ENCODE measurements at regions of chr2 and their contacts with region 1.

Region 1: DNA sequence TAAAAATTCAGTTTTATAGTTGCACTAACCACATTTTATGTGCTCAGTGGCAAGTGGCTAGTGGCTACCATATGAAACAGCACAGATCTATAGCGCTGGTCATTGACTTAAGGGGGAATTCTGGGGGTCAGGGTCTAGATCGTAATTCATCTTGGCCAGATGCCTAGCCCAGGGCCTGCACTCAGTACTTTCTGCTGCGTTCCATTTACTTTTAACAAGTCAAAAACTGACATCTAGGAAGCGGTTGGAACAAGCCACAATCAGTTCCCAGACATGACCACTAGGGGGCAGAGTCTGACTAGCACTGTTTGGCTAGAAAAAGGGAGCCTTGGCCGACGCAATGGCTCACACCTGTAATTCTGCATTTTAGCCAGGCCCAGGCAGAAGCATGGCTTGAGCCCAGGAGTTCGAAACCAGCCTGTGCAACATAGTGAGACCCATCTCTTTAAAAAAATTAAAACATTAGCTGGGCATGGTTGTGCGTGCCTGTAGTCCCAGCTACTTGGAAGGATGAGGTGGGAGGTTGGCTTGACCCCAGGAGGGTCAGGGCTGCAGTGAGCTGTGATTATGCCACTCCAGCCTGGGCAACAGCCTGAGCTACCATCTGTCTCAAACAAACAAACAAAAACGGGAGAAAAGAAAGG is 9.0 kb upstream of the TMBIM1 start:
- DNase-seq: peak; percentile 56 to 89 (median 74)
- H3K4me3 ChIP-seq: peak overlapping the region in 1 of 59 donors; percentile 4
- H3K27ac ChIP-seq: peak overlapping the region in 34 of 59 donors; percentile 2 to 98 (median 60)
- H3K27me3 ChIP-seq: no peaks in the 10 kb centered on the region
- CTCF ChIP-seq: peak; percentile 92 to 100 (median 99)

Region 2: GRCh38 chr2:218063486-218063885 is 237.8 kb before region 1 on chr2:
- intact Hi-C with region 1: no loop called
- DNase-seq: no peak
- H3K4me3 ChIP-seq: no peak overlapping the region
- H3K27ac ChIP-seq: no peak overlapping the region
- H3K27me3 ChIP-seq: peaks cover 0 to 15% (median 0%) of the 10 kb centered on the region in 45 donors
- CTCF ChIP-seq: no peak

Region 3: DNA sequence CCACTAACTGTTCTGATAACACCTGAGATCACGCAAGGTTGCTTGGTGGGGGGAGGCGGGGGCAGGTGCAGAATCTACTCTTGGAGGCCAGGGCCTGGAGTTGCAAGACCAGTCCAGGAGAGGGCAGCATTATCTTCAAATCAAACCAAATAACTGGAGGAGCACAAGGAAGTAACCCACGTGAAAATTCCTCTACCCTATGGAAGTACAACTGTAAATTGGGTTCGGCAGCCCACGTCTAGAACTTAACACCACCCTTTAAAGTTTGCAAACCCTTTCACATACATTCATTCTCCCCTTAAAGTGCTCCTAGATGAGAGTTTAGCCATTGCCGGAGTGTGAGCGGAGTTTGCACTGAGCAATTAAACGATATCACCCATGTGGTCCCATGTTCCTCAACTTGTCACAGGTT is 114.9 kb before region 1 on chr2:
- intact Hi-C with region 1: no loop called
- DNase-seq: peak in 7 of 10 donors; percentile 17 to 51 (median 38)
- H3K4me3 ChIP-seq: peak overlapping the region in 1 of 59 donors; percentile 21
- H3K27ac ChIP-seq: no peak overlapping the region
- H3K27me3 ChIP-seq: no peaks in the 10 kb centered on the region
- CTCF ChIP-seq: peak; percentile 38 to 84 (median 73)

Region 4: DNA sequence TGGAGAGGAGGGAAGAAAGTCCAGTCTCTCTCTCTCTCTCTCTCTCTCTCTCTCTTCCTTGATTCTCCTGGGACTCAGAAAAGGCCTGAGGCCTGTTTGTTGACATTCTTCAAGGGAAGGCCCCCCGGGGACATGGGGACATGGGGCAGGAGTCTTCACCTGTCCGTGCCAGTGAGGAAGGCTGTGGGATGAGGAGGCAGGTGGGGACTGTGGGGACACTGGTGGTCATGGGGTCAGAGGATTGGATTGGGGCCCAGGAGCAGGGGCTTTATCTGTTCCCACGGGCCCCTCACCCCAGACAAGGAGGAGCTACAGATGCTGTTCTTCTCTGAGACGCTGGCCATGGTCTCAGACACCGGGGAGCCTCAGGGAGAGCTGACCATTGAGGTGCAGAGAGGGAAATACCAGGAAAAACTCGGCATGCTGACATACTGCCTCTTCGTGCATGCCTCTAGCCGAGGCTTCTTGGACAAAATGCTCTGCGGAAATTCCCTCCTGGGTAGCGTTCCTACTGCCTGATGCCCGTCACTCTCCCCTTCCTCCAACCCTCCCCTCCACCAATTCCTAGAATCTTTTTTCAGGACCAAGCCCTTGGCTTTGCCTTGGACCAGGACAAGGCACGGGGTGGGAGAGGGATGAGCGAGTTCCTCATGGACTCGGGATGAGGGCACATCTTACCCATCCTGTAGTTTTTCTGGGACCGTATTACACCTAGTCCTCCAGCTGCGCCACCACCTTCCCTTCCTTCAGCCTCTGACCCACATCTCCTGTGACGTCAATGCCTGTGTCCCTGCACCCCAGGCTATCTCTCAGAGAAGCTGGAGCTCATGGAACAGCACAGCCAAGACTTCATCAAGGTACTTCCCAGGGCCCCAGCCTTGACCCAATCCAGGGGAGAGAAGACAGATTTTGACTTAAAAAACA is 56.2 kb after region 1 on chr2:
- intact Hi-C with region 1: loop called in 1 of 2 experiments (anchors 2 kb)
- DNase-seq: no peak
- H3K4me3 ChIP-seq: peak overlapping the region in 1 of 59 donors; percentile 20
- H3K27ac ChIP-seq: peak overlapping the region in 1 of 59 donors; percentile 16
- H3K27me3 ChIP-seq: no peaks in the 10 kb centered on the region
- CTCF ChIP-seq: no peak

Region 5: DNA sequence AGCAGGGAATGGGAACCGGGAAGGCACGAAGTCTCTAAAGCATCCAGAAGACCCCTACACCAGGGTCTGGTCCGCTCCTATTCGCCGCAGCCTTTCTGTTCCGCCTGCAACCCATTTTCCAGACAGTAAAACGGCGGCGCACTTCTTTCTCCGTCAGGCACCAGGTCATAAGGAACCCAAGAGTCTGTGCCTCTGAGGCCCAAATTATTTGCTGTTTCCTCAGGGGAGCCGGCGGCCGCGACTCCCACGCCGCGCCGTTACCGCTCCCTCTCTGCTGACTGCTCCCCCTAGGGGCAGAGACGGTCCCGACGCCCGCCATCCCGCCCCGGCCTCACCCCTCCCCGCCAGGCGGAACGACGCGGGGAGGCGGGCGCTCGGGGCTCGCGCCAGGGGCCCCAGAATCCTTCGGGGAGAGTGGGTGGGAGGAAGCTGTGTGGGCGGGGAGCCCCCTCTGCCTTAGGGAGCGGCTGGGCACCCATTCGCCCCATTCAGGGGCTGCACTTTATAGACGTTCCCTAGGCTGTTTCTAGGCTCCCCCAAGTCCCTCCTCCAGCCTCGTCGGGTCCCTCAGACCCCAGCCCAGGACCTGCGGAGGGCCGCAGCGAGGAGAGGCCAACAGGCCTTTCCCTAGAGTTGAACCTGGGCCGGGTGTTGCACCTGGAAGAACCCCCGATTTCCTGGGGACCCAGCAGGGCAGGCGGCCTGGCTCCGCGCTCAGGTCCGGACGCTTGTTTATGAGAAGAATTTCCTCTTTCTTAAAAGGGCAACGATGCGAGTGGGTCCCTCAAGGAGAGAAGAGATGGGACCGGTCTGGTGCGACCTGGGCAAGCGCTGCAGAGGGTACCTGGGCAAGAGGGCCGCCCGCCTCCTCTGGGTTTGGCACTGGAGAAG is 94.7 kb after region 1 on chr2:
- intact Hi-C with region 1: loop called in 1 of 2 experiments (anchors 2 kb)
- DNase-seq: peak; percentile 84 to 96 (median 92)
- H3K4me3 ChIP-seq: peak overlapping the region; percentile 62 to 99 (median 94)
- H3K27ac ChIP-seq: peak overlapping the region; percentile 91 to 100 (median 99)
- H3K27me3 ChIP-seq: peaks cover 0 to 5% (median 0%) of the 10 kb centered on the region in 45 donors
- CTCF ChIP-seq: peak; percentile 66 to 98 (median 91)

Region 6: DNA sequence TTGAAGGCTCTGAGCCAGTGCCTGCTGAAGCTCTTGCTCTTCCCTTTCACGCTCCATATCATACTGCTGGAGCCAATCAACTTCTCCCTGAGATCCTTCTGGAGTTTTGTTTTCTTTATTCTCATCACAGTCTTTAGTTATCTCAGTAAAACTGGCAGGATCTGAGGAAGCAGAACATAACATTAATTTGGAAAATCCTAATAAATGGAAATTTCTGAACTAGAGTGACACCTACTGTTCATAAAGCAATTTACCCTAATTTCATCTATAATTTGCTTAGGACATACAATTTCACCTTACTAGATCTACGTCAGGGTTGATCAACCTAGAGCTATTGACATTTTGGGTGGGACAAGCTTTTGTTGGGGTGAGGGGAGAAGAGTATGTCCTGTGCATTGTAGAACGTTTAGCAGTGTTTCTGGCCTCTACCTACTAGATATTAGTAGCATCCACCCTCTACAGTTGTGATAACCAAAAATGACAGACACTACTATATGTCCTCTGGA is 164.8 kb after region 1 on chr2:
- intact Hi-C with region 1: loop called in 1 of 2 experiments (anchors 10 kb)
- DNase-seq: no peak
- H3K4me3 ChIP-seq: no peak overlapping the region
- H3K27ac ChIP-seq: peak overlapping the region in 2 of 59 donors; percentile 39 to 40
- H3K27me3 ChIP-seq: no peaks in the 10 kb centered on the region
- CTCF ChIP-seq: peak in 55 of 56 donors; percentile 22 to 76 (median 54)

Region 7: GRCh38 chr2:218691234-218691633 is 389.9 kb after region 1 on chr2:
- intact Hi-C with region 1: no loop called
- DNase-seq: no peak
- H3K4me3 ChIP-seq: no peak overlapping the region
- H3K27ac ChIP-seq: no peak overlapping the region
- H3K27me3 ChIP-seq: no peaks in the 10 kb centered on the region
- CTCF ChIP-seq: no peak